ENCODE measurements at regions of chr13 and their contacts with region 1.

Region 1: GRCh38 chr13:37640499-37640898 is 41.9 kb upstream of the POSTN start:
- DNase-seq: no peak
- ATAC-seq: no peak
- H3K4me3 ChIP-seq: no peak overlapping the region
- H3K27ac ChIP-seq: no peak overlapping the region
- H3K4me1 ChIP-seq: no peaks in the 10 kb centered on the region
- H3K27me3 ChIP-seq: no peaks in the 10 kb centered on the region
- CTCF ChIP-seq: peak in 11 of 12 donors; percentile 16 to 56 (median 35)
- POLR2A ChIP-seq: no peak

Region 2: GRCh38 chr13:37585541-37585940 is 55.0 kb before region 1 on chr13:
- intact Hi-C with region 1: no loop called
- DNase-seq: no peak
- ATAC-seq: peak in 1 of 4 donors; percentile 26
- H3K4me3 ChIP-seq: no peak overlapping the region
- H3K27ac ChIP-seq: no peak overlapping the region
- H3K4me1 ChIP-seq: peaks cover 0 to 12% (median 0%) of the 10 kb centered on the region in 12 donors
- H3K27me3 ChIP-seq: no peaks in the 10 kb centered on the region
- CTCF ChIP-seq: no peak
- POLR2A ChIP-seq: no peak

Region 3: GRCh38 chr13:37602747-37603381 is 37.6 kb before region 1 on chr13:
- intact Hi-C with region 1: no loop called
- DNase-seq: no peak
- ATAC-seq: peak in 1 of 4 donors; percentile 63
- H3K4me3 ChIP-seq: no peak overlapping the region
- H3K27ac ChIP-seq: no peak overlapping the region
- H3K4me1 ChIP-seq: peaks cover 0 to 15% (median 0%) of the 10 kb centered on the region in 12 donors
- H3K27me3 ChIP-seq: no peaks in the 10 kb centered on the region
- CTCF ChIP-seq: peak; percentile 36 to 75 (median 66)
- POLR2A ChIP-seq: no peak

Region 4: DNA sequence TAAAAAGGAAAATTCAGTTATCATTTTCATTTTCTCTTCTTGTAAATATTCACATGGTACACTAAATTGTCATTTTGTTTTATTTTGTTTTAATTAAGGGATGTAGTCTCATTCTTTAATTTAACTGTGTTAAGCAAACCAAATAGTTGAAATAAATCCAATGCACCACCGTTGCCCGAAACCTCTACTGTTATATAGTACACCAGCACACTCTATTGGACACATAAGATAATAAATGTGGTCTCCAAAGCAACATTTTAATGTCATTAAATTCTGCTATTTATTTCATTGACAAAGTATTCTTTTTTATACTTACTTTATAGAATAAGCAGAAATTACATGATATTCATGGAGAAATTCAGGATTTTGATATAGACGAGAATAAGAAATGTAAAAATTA is 890.0 kb after region 1 on chr13:
- intact Hi-C with region 1: loop called in 2 of 10 experiments (anchors 5 to 10 kb)
- DNase-seq: no peak
- ATAC-seq: peak in 1 of 4 donors; percentile 59
- H3K4me3 ChIP-seq: no peak overlapping the region
- H3K27ac ChIP-seq: no peak overlapping the region
- H3K4me1 ChIP-seq: no peaks in the 10 kb centered on the region
- H3K27me3 ChIP-seq: peaks cover 0 to 10% (median 0%) of the 10 kb centered on the region in 9 donors
- CTCF ChIP-seq: peak in 10 of 12 donors; percentile 10 to 58 (median 48)
- POLR2A ChIP-seq: no peak

Region 5: DNA sequence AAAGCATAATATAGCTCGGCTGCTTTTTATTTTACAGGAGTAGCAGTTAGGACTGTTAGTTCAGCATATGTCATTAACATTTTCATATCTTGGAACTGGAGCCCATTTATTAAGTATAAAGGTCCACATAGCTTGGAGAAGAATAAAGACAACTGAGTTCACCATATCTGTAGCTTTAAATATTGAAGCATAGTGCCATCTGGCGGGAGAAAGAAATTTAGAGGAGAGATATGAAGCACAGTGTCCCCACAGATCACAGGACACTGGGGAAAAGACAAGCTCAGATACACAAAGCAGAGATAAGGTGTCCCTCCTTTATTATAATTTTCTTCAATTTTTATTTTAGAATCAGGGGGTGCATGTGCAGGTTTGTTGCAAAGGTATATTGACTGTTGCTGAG is 941.6 kb after region 1 on chr13:
- intact Hi-C with region 1: loop called in 1 of 10 experiments (anchors 5 kb)
- DNase-seq: no peak
- ATAC-seq: peak in 2 of 4 donors; percentile 59 to 70
- H3K4me3 ChIP-seq: no peak overlapping the region
- H3K27ac ChIP-seq: no peak overlapping the region
- H3K4me1 ChIP-seq: no peaks in the 10 kb centered on the region
- H3K27me3 ChIP-seq: no peaks in the 10 kb centered on the region
- CTCF ChIP-seq: peak in 10 of 12 donors; percentile 25 to 57 (median 42)
- POLR2A ChIP-seq: no peak